Activated CD4-positive, alpha-beta T cell treated with anti-CD3 and anti-CD28 coated beads, Interleukin-2, amount 10 ng/mL, durations not matched to agents 24 days and 14 days (primary cell): ENCODE measurements at regions of chr6 and their contacts with region 1.

Region 1: GRCh38 chr6:188821-189655 is 103.2 kb upstream of the DUSP22 start:
- DNase-seq: peak; percentile 95
- H3K4me3 Mint-ChIP-seq: peak overlapping the region; percentile 60
- H3K27ac Mint-ChIP-seq: peak overlapping the region; percentile 91
- H3K4me1 Mint-ChIP-seq: peaks cover 48% of the 10 kb centered on the region
- H3K27me3 Mint-ChIP-seq: no peaks in the 10 kb centered on the region

Region 2: DNA sequence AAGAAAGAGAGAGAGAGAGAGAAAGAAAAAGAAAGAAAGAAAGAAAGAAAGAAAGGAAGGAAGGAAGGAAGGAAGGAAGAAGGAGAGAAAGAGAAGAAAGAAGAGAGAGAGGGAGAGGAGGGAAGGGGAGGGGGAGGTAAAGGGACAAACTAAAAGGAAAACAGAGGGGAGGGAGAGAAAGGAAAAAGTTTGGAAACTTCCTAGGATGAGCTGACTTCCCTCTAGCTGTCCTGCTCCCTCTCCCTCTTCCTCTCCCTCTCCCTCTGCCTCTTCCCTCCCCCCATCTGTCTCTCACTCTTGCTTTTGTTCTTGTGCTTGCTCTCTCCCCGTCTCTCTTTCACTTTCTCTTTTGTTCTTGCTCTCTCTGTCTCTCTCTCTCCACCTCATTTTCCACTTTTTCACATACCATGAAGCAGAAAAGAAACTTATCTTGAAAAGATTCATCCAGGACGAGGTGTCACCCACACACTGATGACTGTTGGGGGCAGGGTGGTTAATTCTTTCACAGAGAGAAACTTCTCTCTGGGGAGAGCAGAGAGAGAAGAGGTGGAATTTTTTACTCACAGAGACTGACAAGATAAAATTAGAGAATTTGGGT is 46.8 kb after region 1 on chr6:
- intact Hi-C with region 1: loop called (anchors 1 kb)
- DNase-seq: peak; percentile 87
- H3K4me3 Mint-ChIP-seq: peak overlapping the region; percentile 74
- H3K27ac Mint-ChIP-seq: peak overlapping the region; percentile 85
- H3K4me1 Mint-ChIP-seq: peaks cover 47% of the 10 kb centered on the region
- H3K27me3 Mint-ChIP-seq: no peaks in the 10 kb centered on the region

Region 3: DNA sequence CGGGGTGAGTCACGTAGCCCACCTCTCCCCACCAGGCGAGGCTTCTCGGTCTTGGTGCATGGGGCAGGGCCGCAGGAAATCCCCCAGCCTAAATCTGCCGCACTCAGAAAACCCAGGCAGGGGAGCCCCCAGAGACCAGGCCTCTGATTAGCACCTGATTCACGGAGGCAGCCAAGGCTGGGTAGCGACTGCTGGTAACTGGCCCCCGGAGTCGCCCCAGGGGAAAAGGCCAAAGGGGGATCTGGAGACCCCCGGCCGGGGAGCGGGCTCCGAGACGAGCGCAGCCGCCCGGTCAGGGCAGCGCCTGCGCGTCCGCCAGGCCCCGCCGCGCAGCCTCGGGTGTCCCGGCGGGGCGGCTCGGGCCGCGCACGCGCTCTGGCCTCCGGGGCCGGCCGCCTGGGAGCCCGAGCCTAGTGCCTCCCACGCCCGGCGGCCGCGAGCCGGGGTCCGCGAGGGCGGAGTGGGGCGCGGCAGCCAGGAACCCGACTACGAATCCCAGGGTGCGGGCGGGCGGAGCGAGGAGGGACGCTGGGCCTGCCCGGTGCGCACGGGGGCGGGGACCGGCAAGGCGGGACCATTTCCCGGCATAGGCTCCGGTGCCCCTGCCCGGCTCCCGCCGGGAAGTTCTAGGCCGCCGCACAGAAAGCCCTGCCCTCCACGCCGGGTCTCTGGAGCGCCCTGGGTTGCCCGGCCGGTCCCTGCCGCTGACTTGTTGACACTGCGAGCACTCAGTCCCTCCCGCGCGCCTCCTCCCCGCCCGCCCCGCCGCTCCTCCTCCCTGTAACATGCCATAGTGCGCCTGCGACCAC is 102.9 kb after region 1 on chr6 and contains the start of gene DUSP22:
- intact Hi-C with region 1: loop called (anchors 1 kb)
- DNase-seq: peak; percentile 94
- H3K4me3 Mint-ChIP-seq: peak within 1 kb of the TSS; percentile 86
- H3K27ac Mint-ChIP-seq: peak within 1 kb of the TSS; percentile 95
- H3K4me1 Mint-ChIP-seq: peaks cover 45% of the 10 kb centered on the region
- H3K27me3 Mint-ChIP-seq: no peaks in the 10 kb centered on the region
- total RNA-seq, gene DUSP22: 22.5 and 24.0 TPM in 2 replicates

Region 4: DNA sequence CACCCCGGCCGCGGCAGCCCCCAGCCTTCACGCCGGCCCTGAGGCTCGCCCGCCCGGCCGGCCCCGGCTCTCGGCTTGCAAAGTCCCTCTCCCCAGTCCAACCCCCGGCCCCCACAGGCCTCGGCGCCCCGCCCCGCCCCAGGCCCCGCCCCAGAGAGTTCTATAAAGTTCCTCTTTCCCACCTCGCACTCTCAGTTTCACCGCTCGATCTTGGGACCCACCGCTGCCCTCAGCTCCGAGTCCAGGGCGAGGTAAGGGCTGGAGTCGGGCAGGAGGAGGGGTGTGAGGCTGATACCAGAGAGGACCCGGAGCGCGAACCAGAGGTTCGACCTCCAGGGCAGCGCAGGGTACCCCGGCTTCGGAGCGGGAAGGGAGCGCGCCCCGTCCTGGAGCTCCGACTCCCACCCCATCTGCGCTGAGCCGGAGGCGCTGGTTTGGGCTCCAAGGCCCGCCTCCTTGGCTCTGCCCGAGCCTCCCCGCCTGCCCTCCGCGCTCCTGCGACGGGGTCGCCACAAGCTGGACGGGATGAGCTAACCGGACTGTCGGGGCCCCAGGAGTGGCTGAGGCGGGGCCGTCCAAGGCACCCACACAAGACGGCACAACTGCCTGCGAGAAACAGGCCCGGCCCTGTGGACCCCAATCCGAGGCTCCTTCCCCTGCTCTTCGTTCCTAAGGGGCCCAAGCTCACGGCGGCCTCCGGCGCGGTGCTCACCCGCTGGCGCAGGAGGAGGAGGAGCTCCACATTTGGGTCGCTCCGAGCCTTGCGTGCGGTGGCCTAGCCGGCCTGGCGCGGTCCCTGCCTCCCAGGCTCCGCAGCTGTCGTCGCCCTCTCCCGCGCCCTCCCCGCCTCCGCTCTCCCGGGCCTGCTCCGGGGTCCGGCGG is 202.8 kb after region 1 on chr6 and contains the start of gene IRF4:
- intact Hi-C with region 1: loop called (anchors 1 kb)
- DNase-seq: peak; percentile 92
- H3K4me3 Mint-ChIP-seq: peak within 1 kb of the TSS; percentile 93
- H3K27ac Mint-ChIP-seq: peak within 1 kb of the TSS; percentile 98
- H3K4me1 Mint-ChIP-seq: peaks cover 40% of the 10 kb centered on the region
- H3K27me3 Mint-ChIP-seq: peaks cover 2% of the 10 kb centered on the region
- total RNA-seq, gene IRF4: 831 and 846 TPM in 2 replicates

Region 5: DNA sequence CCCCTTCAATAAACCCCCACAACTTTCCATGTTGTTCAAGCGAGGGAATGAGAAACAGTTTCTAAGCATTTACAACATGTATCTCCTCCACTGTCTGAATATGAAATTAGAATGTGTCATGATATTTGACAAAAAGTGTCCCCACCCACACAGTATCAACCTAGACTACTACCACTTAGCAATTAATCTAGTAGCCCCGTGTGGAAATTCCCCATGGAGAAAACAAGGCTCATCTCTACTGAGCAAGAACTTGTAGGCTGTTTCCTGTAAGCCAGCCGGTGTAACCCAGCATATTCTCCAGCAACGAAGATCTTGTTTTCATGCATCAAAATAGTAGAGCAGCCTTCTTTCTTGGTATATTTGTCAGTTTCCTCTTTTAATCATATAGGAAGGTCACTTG is 317.5 kb after region 1 on chr6:
- intact Hi-C with region 1: loop called (anchors 2 kb)
- DNase-seq: peak; percentile 77
- H3K4me3 Mint-ChIP-seq: peak overlapping the region; percentile 75
- H3K27ac Mint-ChIP-seq: peak overlapping the region; percentile 98
- H3K4me1 Mint-ChIP-seq: peaks cover 90% of the 10 kb centered on the region
- H3K27me3 Mint-ChIP-seq: no peaks in the 10 kb centered on the region

Region 6: GRCh38 chr6:683742-684440 is 494.9 kb after region 1 on chr6:
- intact Hi-C with region 1: loop called (anchors 2 kb)
- DNase-seq: peak; percentile 66
- H3K4me3 Mint-ChIP-seq: peak overlapping the region; percentile 71
- H3K27ac Mint-ChIP-seq: peak overlapping the region; percentile 77
- H3K4me1 Mint-ChIP-seq: peaks cover 41% of the 10 kb centered on the region
- H3K27me3 Mint-ChIP-seq: no peaks in the 10 kb centered on the region